ENCODE measurements at regions of chr9 and their contacts with region 1.

Region 1: GRCh38 chr9:71285191-71285656 is 163.8 kb upstream of the TRPM3 start:
- DNase-seq: peak; percentile 62
- ATAC-seq: peak; percentile 91
- H3K4me3 ChIP-seq: no peak overlapping the region
- H3K27ac ChIP-seq: no peak overlapping the region
- H3K4me1 ChIP-seq: peaks cover 17% of the 10 kb centered on the region
- H3K27me3 ChIP-seq: no peaks in the 10 kb centered on the region
- CTCF ChIP-seq: peak; percentile 87
- EP300 ChIP-seq: no peak
- POLR2A ChIP-seq: no peak
- RAD21 ChIP-seq: 0 out of 2 replicates have a peak, but pooled peaks have one; percentile 36

Region 2: GRCh38 chr9:71582347-71582746 is 297.1 kb after region 1 on chr9:
- CTCF ChIA-PET with region 1: no interaction called
- POLR2A ChIA-PET with region 1: no interaction called
- in situ Hi-C with region 1: no loop called
- intact Hi-C with region 1: no loop called
- DNase-seq: no peak
- ATAC-seq: no peak
- H3K4me3 ChIP-seq: no peak overlapping the region
- H3K27ac ChIP-seq: no peak overlapping the region
- H3K4me1 ChIP-seq: no peaks in the 10 kb centered on the region
- H3K27me3 ChIP-seq: peaks cover 0 to 12% of the 10 kb centered on the region in 2 experiments; a peak in 2 of 5 replicates
- CTCF ChIP-seq: no peak
- EP300 ChIP-seq: no peak
- POLR2A ChIP-seq: no peak
- RAD21 ChIP-seq: no peak

Region 3: GRCh38 chr9:71819115-71819739 is 534.0 kb after region 1 on chr9:
- CTCF ChIA-PET with region 1: interaction called, 3 read pairs
- POLR2A ChIA-PET with region 1: no interaction called
- in situ Hi-C with region 1: loop called (anchors 25 kb)
- intact Hi-C with region 1: loop called (anchors 2 kb)
- DNase-seq: peak; percentile 16
- ATAC-seq: no peak
- H3K4me3 ChIP-seq: no peak overlapping the region
- H3K27ac ChIP-seq: no peak overlapping the region
- H3K4me1 ChIP-seq: peaks cover 14% of the 10 kb centered on the region
- H3K27me3 ChIP-seq: no peaks in the 10 kb centered on the region
- CTCF ChIP-seq: peak; percentile 50
- EP300 ChIP-seq: no peak
- POLR2A ChIP-seq: no peak
- RAD21 ChIP-seq: no peak

Region 4: DNA sequence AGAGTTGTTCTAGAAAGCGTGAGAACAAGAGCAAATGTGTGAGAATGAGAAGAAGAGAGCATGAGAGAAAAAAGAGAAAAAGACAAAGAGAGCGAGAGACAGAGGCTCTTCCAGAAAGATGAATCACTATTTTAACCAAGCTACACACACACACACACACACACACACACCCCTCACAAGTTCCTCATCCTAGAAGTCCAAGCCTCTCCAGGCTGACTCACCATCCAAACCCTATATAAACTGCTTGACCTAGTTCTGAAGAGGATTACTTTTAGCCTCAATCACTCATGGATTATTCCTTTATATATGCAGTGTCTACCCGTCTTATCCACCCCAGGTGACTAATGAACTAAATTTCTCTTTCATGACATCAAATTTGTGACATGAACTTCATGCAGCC is 737.6 kb after region 1 on chr9:
- CTCF ChIA-PET with region 1: no interaction called
- POLR2A ChIA-PET with region 1: no interaction called
- in situ Hi-C with region 1: no loop called
- intact Hi-C with region 1: loop called (anchors 5 kb)
- DNase-seq: no peak
- ATAC-seq: no peak
- H3K4me3 ChIP-seq: no peak overlapping the region
- H3K27ac ChIP-seq: no peak overlapping the region
- H3K4me1 ChIP-seq: peaks cover 11% of the 10 kb centered on the region
- H3K27me3 ChIP-seq: no peaks in the 10 kb centered on the region
- CTCF ChIP-seq: no peak
- EP300 ChIP-seq: no peak
- POLR2A ChIP-seq: no peak
- RAD21 ChIP-seq: no peak